ENCODE measurements at regions of chr7 and their contacts with region 1.

Region 1: GRCh38 chr7:93902777-93903423 is 3.5 kb upstream of the GNGT1 start:
- DNase-seq: peak; percentile 60
- H3K4me3 ChIP-seq: no peak overlapping the region
- H3K27ac ChIP-seq: no peak overlapping the region
- H3K4me1 ChIP-seq: no peaks in the 10 kb centered on the region
- CTCF ChIP-seq: peak; percentile 99

Region 2: DNA sequence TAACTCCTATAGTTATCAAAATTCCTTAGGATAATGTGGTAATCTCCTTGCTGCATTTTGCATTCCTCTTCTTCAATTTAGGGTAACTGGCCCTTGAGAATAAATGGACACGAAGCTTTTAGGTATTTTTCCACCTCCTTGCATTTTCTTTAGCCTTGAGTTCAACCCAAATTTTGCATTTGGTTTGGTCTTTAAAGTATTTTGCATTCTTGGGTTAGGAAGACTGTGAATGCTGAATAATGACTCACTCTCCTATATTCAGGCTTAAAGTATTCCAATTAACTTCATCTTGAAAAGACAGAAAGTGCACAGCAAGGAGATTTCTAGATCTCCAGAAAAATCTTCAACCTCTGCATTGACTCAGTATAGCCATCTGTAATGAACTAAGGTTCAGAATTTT is 59.6 kb before region 1 on chr7:
- CTCF ChIA-PET with region 1: no interaction called
- POLR2A ChIA-PET with region 1: no interaction called
- intact Hi-C with region 1: no loop called
- DNase-seq: no peak
- H3K4me3 ChIP-seq: no peak overlapping the region
- H3K27ac ChIP-seq: no peak overlapping the region
- H3K4me1 ChIP-seq: peaks cover 5% of the 10 kb centered on the region
- CTCF ChIP-seq: no peak

Region 3: DNA sequence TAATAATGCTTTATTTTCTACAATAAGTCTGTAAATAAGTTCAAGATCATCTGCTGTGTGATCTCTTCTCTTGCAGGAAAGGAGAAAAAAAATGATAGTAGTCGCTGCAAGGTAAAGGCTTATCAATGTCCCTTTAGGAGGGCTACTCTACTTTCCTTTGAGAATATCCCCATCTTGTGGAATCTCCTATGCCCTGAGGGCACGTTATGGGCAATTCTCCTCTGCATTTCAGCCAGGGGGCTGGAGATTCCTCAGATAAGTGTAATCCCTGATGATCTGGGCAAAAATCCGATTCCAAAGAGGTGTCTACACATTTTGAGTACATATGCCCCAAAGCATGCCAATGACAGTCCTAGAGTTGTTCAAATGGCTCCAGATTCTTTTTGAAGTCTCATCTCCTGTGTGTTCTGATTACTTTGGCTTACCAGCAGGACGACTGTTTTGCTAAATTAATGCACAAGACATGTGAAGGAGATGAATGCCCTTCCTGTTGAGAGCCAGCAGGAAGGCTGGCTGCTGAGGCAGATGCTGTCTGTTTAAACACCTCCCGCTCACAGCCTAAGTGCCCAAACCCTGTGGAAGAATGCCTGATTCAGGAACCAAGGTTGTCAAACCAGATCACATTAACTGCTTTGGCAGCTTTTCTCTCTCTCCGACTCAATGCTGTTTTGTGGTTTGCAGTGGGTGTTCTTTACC is 320.6 kb after region 1 on chr7:
- CTCF ChIA-PET with region 1: no interaction called
- POLR2A ChIA-PET with region 1: no interaction called
- intact Hi-C with region 1: loop called (anchors 5 kb)
- DNase-seq: peak; percentile 41
- H3K4me3 ChIP-seq: no peak overlapping the region
- H3K27ac ChIP-seq: no peak overlapping the region
- H3K4me1 ChIP-seq: no peaks in the 10 kb centered on the region
- CTCF ChIP-seq: peak; percentile 56

Region 4: DNA sequence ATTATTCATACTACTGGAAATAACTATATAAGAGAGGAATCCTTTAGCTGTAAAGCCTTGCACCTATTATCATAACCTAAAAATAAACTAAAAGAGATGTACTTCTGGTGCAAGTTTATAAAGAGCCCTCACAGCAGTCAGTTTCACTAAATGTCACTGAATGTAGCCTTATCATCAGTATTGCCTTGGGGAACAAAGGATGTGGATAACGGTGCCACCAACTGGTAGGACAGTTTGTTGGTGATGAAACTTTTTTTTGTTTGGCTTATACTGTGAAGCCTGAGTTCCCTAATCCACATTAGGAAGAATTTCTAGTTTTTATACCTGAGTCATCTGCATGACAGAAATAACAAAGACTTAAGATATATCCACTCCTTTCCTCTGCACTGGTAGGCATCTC is 373.9 kb after region 1 on chr7:
- CTCF ChIA-PET with region 1: no interaction called
- POLR2A ChIA-PET with region 1: no interaction called
- intact Hi-C with region 1: loop called (anchors 5 kb)
- DNase-seq: peak; percentile 38
- H3K4me3 ChIP-seq: no peak overlapping the region
- H3K27ac ChIP-seq: no peak overlapping the region
- H3K4me1 ChIP-seq: no peaks in the 10 kb centered on the region
- CTCF ChIP-seq: peak; percentile 69

Region 5: GRCh38 chr7:94395141-94396036 is 492.5 kb after region 1 on chr7:
- CTCF ChIA-PET with region 1: no interaction called
- POLR2A ChIA-PET with region 1: no interaction called
- intact Hi-C with region 1: loop called (anchors 1 kb)
- DNase-seq: peak; percentile 64
- H3K4me3 ChIP-seq: no peak overlapping the region
- H3K27ac ChIP-seq: no peak overlapping the region
- H3K4me1 ChIP-seq: no peaks in the 10 kb centered on the region
- CTCF ChIP-seq: peak; percentile 89

Measured in OCI-LY7 (cell line).